ENCODE measurements at regions of chr1 and their contacts with region 1.

Region 1: DNA sequence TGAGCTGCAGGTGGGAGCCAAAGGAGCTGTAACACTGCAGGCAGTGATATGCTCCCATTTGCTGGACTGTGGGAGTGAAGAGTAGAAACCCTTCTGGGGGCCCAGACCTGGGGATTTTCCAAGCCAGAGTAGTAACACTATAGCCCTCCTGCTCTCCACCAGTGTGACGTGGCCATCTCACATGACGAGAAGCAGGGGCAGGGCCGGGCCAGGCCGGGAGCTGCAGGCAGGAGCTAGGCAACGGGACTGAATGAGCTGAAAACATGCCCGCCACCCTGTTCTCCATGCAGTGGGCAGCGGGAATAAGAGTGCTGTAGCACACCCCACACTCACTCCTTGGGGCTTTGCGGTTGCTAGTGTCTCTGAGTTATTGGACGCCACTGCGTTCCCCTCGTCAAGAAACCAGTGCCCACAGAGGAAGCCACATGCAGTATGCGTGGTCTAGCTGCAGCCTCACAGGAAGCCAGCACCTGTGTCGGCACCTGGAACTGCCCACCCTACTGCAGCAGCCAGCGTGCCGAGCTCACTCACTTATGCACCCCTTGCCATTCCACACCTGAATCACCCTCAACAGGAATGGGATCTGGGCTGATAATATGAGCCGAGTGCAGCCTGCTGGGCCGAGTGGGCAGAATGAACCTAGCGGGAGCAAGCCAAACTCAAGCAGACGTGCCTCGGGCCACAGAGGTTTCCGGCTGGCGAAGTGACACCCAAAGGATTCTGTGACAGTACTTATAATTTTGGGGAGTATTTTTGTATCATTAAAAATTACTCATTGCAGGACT is 1389.6 kb downstream of the KCNT2 start:
- DNase-seq: no peak
- ATAC-seq: no peak
- H3K4me3 Mint-ChIP-seq: no peak overlapping the region
- H3K27ac Mint-ChIP-seq: no peak overlapping the region
- H3K4me1 Mint-ChIP-seq: no peaks in the 10 kb centered on the region
- H3K27me3 Mint-ChIP-seq: peaks cover 3% of the 10 kb centered on the region

Region 2: GRCh38 chr1:195158091-195158490 is 60.5 kb before region 1 on chr1:
- CTCF ChIA-PET with region 1: no interaction called
- POLR2A ChIA-PET with region 1: no interaction called
- intact Hi-C with region 1: loop called in 1 of 2 experiments (anchors 10 kb)
- DNase-seq: no peak
- ATAC-seq: no peak
- H3K4me3 Mint-ChIP-seq: no peak overlapping the region
- H3K27ac Mint-ChIP-seq: no peak overlapping the region
- H3K4me1 Mint-ChIP-seq: no peaks in the 10 kb centered on the region
- H3K27me3 Mint-ChIP-seq: no peaks in the 10 kb centered on the region

Region 3: GRCh38 chr1:195306281-195306680 is 87.7 kb after region 1 on chr1:
- CTCF ChIA-PET with region 1: no interaction called
- POLR2A ChIA-PET with region 1: no interaction called
- intact Hi-C with region 1: no loop called
- DNase-seq: no peak
- ATAC-seq: no peak
- H3K4me3 Mint-ChIP-seq: no peak overlapping the region
- H3K27ac Mint-ChIP-seq: no peak overlapping the region
- H3K4me1 Mint-ChIP-seq: no peaks in the 10 kb centered on the region
- H3K27me3 Mint-ChIP-seq: no peaks in the 10 kb centered on the region